Caco-2 (cell line): ENCODE measurements at regions of chr5 and their contacts with region 1.

Region 1: DNA sequence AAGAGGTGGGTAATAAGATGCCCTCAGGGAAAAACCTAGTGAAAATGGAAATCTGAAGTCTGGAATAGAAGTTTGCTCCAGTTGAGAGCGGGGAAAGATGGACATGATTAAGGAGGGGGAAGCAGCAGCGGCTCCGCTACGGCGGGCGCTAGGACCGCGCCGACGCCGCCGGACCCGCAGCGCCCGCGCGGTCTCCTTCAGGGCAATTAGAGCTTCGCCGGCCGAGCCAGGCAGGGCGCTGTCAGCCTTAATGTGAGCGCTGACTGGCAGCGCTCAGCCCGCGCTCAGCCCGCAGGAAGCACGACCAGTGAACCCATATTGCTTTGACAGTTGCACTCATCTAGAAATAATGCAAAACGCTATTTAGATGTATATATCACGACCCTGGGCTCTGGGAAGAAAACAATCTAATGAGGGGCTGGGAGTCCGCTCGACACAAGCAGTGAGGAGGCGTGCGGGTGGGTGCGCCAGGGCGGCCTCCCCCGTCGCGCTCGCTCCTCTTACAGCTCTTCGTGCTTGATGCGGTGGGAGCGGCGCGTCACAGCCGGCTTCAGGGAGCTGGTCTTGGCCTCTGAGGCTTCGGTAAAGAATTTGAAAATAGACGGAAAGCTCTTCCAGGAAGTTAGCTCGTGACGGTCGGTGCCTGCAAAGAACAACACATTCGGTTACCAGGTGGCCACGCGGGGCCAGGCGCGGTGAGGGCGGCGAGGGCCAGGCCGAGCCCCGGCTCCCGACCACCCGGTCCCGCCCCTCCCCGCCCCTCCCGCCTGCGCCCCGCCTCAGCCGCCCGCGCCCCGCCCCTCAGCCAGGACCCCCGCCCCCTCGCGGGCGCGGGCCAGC is 37.7 kb downstream of the NR2F1 start:
- DNase-seq: peak; percentile 69 to 76
- H3K4me3 ChIP-seq: peak overlapping the region; percentile 83
- H3K4me3 Mint-ChIP-seq: peak overlapping the region; percentile 97
- H3K27ac Mint-ChIP-seq: peak overlapping the region; percentile 69
- H3K4me1 ChIP-seq: no peaks in the 10 kb centered on the region
- H3K4me1 Mint-ChIP-seq: peaks cover 12% of the 10 kb centered on the region
- H3K27me3 ChIP-seq: no peaks in the 10 kb centered on the region
- H3K27me3 Mint-ChIP-seq: no peaks in the 10 kb centered on the region
- CTCF ChIP-seq: no peak

Region 2: DNA sequence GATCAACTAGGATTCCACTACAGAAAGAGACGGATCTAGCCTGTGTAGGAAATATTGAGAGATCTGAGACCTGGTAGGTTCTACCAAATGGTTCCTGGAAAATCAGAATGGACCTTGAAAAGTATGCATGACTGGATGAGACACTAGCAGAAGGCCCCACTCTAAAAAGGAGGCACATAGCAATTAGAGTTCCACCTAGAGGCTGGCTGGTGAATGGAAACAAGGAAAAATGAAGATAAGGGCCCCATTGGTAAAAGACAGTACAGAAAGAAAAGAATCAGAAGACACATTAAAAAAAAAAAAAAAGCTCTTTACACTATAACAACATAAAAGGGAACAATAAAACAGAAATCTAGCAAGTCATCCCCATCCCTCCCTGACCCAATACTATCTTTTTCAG is 558.2 kb before region 1 on chr5:
- CTCF ChIA-PET with region 1: no interaction called
- POLR2A ChIA-PET with region 1: no interaction called
- intact Hi-C with region 1: no loop called
- DNase-seq: peak in 1 of 2 experiments; percentile 22
- H3K4me3 ChIP-seq: no peak overlapping the region
- H3K4me3 Mint-ChIP-seq: no peak overlapping the region
- H3K27ac Mint-ChIP-seq: no peak overlapping the region
- H3K4me1 ChIP-seq: no peaks in the 10 kb centered on the region
- H3K4me1 Mint-ChIP-seq: no peaks in the 10 kb centered on the region
- H3K27me3 ChIP-seq: no peaks in the 10 kb centered on the region
- H3K27me3 Mint-ChIP-seq: no peaks in the 10 kb centered on the region
- CTCF ChIP-seq: peak; percentile 27 to 55

Region 3: DNA sequence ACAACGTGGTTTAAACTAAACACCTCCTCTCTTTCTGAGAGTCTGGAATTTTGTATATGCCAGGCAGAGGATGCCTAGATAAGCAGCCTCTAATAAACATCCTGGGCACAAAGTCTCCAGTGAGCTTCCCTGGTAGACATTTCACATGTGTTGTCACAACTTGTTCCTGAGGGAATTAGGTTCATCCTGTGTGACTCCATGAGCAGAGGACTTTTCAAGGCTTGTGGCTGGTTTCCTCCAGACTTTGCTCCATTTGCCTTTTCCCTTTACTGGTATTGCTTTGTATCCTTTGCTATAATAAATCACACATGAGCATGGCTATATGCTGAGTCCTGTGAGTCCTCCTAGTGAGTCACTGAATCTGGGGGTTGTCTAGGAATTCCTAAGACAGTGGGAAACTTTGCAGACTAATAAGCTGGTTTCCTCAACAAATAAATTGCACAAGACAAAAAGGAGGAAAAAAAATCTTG is 117.1 kb before region 1 on chr5:
- CTCF ChIA-PET with region 1: no interaction called
- POLR2A ChIA-PET with region 1: no interaction called
- intact Hi-C with region 1: no loop called
- DNase-seq: no peak
- H3K4me3 ChIP-seq: no peak overlapping the region
- H3K4me3 Mint-ChIP-seq: no peak overlapping the region
- H3K27ac Mint-ChIP-seq: no peak overlapping the region
- H3K4me1 ChIP-seq: no peaks in the 10 kb centered on the region
- H3K4me1 Mint-ChIP-seq: no peaks in the 10 kb centered on the region
- H3K27me3 ChIP-seq: no peaks in the 10 kb centered on the region
- H3K27me3 Mint-ChIP-seq: no peaks in the 10 kb centered on the region
- CTCF ChIP-seq: no peak

Region 4: DNA sequence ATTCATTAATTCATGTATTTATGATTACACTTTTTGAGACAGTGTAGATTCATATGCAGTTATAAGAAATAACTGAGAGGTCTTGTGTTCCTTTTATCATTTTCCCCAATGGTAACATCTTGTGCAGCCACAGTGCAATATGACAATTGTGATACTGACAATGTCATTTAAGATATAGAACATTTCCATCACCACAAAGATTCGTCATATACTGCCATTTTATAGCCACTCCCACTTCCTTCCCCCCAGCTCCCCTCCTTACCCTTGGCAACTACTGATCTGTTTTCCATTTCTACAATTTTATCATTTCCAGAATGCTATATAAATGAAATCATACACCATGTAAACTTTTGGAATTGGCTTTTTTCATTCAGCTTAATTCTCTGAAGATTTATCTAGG is 16.1 kb after region 1 on chr5:
- CTCF ChIA-PET with region 1: interaction called, 6 read pairs
- POLR2A ChIA-PET with region 1: no interaction called
- intact Hi-C with region 1: loop called (anchors 1 kb)
- DNase-seq: no peak
- H3K4me3 ChIP-seq: no peak overlapping the region
- H3K4me3 Mint-ChIP-seq: no peak overlapping the region
- H3K27ac Mint-ChIP-seq: no peak overlapping the region
- H3K4me1 ChIP-seq: peaks cover 10% of the 10 kb centered on the region; the same call in 1 of the 2 replicates
- H3K4me1 Mint-ChIP-seq: peaks cover 11% of the 10 kb centered on the region
- H3K27me3 ChIP-seq: no peaks in the 10 kb centered on the region
- H3K27me3 Mint-ChIP-seq: no peaks in the 10 kb centered on the region
- CTCF ChIP-seq: no peak

Region 5: DNA sequence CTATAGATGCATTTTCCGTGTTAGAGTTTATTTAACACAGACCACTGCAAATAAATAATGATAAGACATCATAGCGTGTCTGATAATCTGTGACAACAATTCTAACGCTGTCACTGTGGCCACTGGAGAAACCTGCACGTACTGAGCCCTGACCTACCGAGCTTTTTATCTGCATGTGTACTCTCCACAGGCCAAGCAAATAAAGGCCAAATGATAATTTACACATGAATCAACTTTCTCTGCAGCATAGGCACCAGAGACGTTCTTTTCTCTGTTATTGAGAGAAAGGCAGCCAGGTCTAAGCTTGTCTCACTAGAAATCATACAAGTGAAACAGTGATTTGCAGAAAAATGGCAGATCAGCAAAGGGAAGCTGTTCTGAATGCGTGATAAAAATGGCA is 44.9 kb after region 1 on chr5:
- CTCF ChIA-PET with region 1: no interaction called
- POLR2A ChIA-PET with region 1: no interaction called
- intact Hi-C with region 1: loop called (anchors 5 kb)
- DNase-seq: no peak
- H3K4me3 ChIP-seq: no peak overlapping the region
- H3K4me3 Mint-ChIP-seq: no peak overlapping the region
- H3K27ac Mint-ChIP-seq: no peak overlapping the region
- H3K4me1 ChIP-seq: no peaks in the 10 kb centered on the region
- H3K4me1 Mint-ChIP-seq: no peaks in the 10 kb centered on the region
- H3K27me3 ChIP-seq: no peaks in the 10 kb centered on the region; the same call in 1 of the 2 replicates
- H3K27me3 Mint-ChIP-seq: no peaks in the 10 kb centered on the region
- CTCF ChIP-seq: no peak

Region 6: DNA sequence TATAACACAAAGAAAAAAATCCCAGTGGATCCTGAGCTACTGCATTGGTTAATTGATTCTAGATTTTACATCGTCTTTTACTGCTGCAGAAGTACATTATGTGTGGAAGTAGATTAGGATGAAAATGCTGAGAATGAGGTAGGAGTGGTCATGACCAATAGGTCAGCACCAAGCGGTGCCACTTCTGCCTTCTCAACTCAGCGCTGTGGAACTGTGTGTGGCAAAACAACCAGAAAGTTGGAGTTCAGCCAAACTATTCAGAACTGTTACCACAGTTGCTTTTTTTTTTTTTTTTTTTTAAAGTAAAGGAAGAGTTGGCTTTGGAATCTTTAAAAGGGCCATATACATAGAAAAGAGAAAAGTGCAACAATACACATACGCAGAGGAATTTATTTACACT is 96.5 kb after region 1 on chr5:
- CTCF ChIA-PET with region 1: no interaction called
- POLR2A ChIA-PET with region 1: no interaction called
- intact Hi-C with region 1: loop called (anchors 5 kb)
- DNase-seq: no peak
- H3K4me3 ChIP-seq: no peak overlapping the region
- H3K4me3 Mint-ChIP-seq: no peak overlapping the region
- H3K27ac Mint-ChIP-seq: no peak overlapping the region
- H3K4me1 ChIP-seq: peaks cover 14% of the 10 kb centered on the region
- H3K4me1 Mint-ChIP-seq: peaks cover 17% of the 10 kb centered on the region
- H3K27me3 ChIP-seq: no peaks in the 10 kb centered on the region
- H3K27me3 Mint-ChIP-seq: no peaks in the 10 kb centered on the region
- CTCF ChIP-seq: no peak